Activated naive CD4-positive, alpha-beta T cell treated with anti-CD3 and anti-CD28 coated beads for 36 hours (primary cell): ENCODE measurements at regions of chr22 and their contacts with region 1.

Region 1: GRCh38 chr22:42033263-42034181 is 34.9 kb downstream of the WBP2NL start:
- DNase-seq: peak; percentile 42
- H3K4me3 Mint-ChIP-seq: no peak overlapping the region
- H3K27ac Mint-ChIP-seq: no peak overlapping the region
- H3K4me1 Mint-ChIP-seq: peaks cover 20% of the 10 kb centered on the region
- H3K27me3 Mint-ChIP-seq: no peaks in the 10 kb centered on the region

Region 2: GRCh38 chr22:41998361-41999275 is 34.9 kb before region 1 on chr22 and contains the start of gene WBP2NL:
- CTCF ChIA-PET with region 1: no interaction called
- intact Hi-C with region 1: loop called (anchors 2 kb)
- DNase-seq: peak; percentile 91
- H3K4me3 Mint-ChIP-seq: peak within 1 kb of the TSS; percentile 83
- H3K27ac Mint-ChIP-seq: peak within 1 kb of the TSS; percentile 81
- H3K4me1 Mint-ChIP-seq: peaks cover 15% of the 10 kb centered on the region
- H3K27me3 Mint-ChIP-seq: no peaks in the 10 kb centered on the region
- total RNA-seq, gene WBP2NL: 0.50 to 0.74 TPM

Region 3: GRCh38 chr22:42022162-42022835 is 11.2 kb before region 1 on chr22:
- CTCF ChIA-PET with region 1: no interaction called
- intact Hi-C with region 1: loop called (anchors 1 kb)
- DNase-seq: no peak
- H3K4me3 Mint-ChIP-seq: no peak overlapping the region
- H3K27ac Mint-ChIP-seq: no peak overlapping the region
- H3K4me1 Mint-ChIP-seq: peaks cover 14% of the 10 kb centered on the region
- H3K27me3 Mint-ChIP-seq: no peaks in the 10 kb centered on the region